ENCODE measurements at regions of chr1 and their contacts with region 1.

Region 1: GRCh38 chr1:41751804-41752513 is 166.8 kb downstream of the HIVEP3 start:
- DNase-seq: peak; percentile 39
- H3K4me3 Mint-ChIP-seq: peak overlapping the region; percentile 40
- H3K27ac Mint-ChIP-seq: peak overlapping the region; percentile 84
- H3K4me1 Mint-ChIP-seq: peaks cover 71% of the 10 kb centered on the region
- H3K27me3 Mint-ChIP-seq: no peaks in the 10 kb centered on the region

Region 2: DNA sequence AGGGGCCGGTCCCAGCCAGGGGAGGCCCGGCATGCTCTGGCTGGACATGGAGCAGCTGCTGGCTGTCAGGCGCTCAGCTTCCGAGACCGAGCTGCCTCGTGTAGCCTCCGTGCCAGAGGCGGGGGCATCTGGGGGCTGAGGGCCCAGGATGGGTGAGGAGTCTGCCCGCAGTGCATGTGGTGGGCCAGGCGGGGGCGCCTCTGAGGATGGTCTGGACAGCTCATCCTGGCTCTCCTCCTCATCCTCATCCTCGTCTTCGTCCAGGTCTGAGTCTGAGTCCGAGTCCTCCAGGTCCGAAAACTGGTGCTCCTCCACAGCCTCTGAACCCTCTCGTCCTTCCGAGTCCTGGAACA is 238.6 kb before region 1 on chr1:
- CTCF ChIA-PET with region 1: no interaction called
- POLR2A ChIA-PET with region 1: no interaction called
- intact Hi-C with region 1: no loop called
- DNase-seq: peak; percentile 40
- H3K4me3 Mint-ChIP-seq: no peak overlapping the region
- H3K27ac Mint-ChIP-seq: no peak overlapping the region
- H3K4me1 Mint-ChIP-seq: peaks cover 6% of the 10 kb centered on the region
- H3K27me3 Mint-ChIP-seq: no peaks in the 10 kb centered on the region

Region 3: GRCh38 chr1:41639332-41639936 is 112.5 kb before region 1 on chr1:
- CTCF ChIA-PET with region 1: no interaction called
- POLR2A ChIA-PET with region 1: interaction called, 5 read pairs
- intact Hi-C with region 1: loop called (anchors 2 kb)
- DNase-seq: peak; percentile 87
- H3K4me3 Mint-ChIP-seq: peak overlapping the region; percentile 59
- H3K27ac Mint-ChIP-seq: no peak overlapping the region
- H3K4me1 Mint-ChIP-seq: peaks cover 12% of the 10 kb centered on the region
- H3K27me3 Mint-ChIP-seq: no peaks in the 10 kb centered on the region

Region 4: GRCh38 chr1:41783189-41783639 is 31.3 kb after region 1 on chr1:
- CTCF ChIA-PET with region 1: no interaction called
- POLR2A ChIA-PET with region 1: no interaction called
- intact Hi-C with region 1: loop called (anchors 1 kb)
- DNase-seq: peak; percentile 76
- H3K4me3 Mint-ChIP-seq: no peak overlapping the region
- H3K27ac Mint-ChIP-seq: peak overlapping the region; percentile 68
- H3K4me1 Mint-ChIP-seq: peaks cover 29% of the 10 kb centered on the region
- H3K27me3 Mint-ChIP-seq: no peaks in the 10 kb centered on the region

Region 5: DNA sequence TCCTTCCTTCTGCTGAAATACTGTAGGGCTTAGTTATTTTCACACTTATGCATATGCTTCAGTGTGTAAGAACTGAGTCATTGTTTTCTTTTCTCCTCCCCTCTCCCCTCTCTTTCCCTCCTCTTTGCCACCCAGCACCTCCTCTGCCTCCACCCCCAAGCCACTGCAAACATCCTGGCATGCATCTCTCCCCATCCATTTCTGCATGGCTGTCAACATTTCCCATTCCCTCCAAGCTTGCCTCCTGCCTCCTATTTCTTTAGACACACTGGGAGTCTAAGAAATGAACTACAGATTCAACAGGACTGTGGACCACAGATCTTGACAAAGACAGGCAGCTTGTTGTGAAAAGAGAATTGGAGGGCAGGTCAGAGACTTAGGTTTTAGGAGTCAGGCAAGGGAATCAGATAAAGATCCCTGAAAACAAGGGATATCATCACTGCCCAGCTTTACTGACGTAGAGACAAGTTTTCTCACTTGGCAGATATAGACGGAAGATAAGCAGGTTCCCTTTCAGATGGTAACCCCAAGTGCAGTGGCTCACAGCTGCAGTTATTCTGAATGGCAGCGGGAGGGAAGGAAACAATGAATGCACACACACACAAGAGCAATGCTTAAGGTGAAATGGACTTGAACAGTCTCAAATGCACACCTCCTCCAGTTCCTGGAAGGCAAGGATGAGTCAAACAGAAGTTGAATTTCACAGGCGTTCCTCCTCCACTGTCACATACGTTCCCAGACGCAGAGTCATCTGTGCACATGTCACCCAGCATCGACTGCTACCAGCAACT is 110.6 kb after region 1 on chr1:
- CTCF ChIA-PET with region 1: no interaction called
- POLR2A ChIA-PET with region 1: no interaction called
- intact Hi-C with region 1: loop called (anchors 2 kb)
- DNase-seq: peak; percentile 83
- H3K4me3 Mint-ChIP-seq: peak overlapping the region; percentile 18
- H3K27ac Mint-ChIP-seq: peak overlapping the region; percentile 83
- H3K4me1 Mint-ChIP-seq: peaks cover 36% of the 10 kb centered on the region
- H3K27me3 Mint-ChIP-seq: no peaks in the 10 kb centered on the region

Measured in activated CD4-positive, alpha-beta memory T cell treated with anti-CD3 and anti-CD28 coated beads for 36 hours (primary cell).